ENCODE measurements at regions of chr20 and their contacts with region 1.

Region 1: GRCh38 chr20:46689082-46689754 is at the start of gene TP53RK:
- DNase-seq: peak; percentile 99
- ATAC-seq: peak; percentile 98
- H3K4me3 Mint-ChIP-seq: peak within 1 kb of the TSS; percentile 93
- H3K27ac Mint-ChIP-seq: peak within 1 kb of the TSS; percentile 97
- H3K4me1 Mint-ChIP-seq: peaks cover 42% of the 10 kb centered on the region
- H3K27me3 Mint-ChIP-seq: no peaks in the 10 kb centered on the region
- CTCF ChIP-seq: no peak
- total RNA-seq, gene TP53RK: 12.2 to 13.6 TPM

Region 2: GRCh38 chr20:46520976-46521579 is 168.1 kb before region 1 on chr20:
- CTCF ChIA-PET with region 1: interaction called, 116 read pairs
- POLR2A ChIA-PET with region 1: no interaction called
- intact Hi-C with region 1: no loop called
- DNase-seq: peak; percentile 68
- ATAC-seq: peak; percentile 98
- H3K4me3 Mint-ChIP-seq: no peak overlapping the region
- H3K27ac Mint-ChIP-seq: no peak overlapping the region
- H3K4me1 Mint-ChIP-seq: no peaks in the 10 kb centered on the region
- H3K27me3 Mint-ChIP-seq: peaks cover 17% of the 10 kb centered on the region
- CTCF ChIP-seq: peak; percentile 68

Region 3: DNA sequence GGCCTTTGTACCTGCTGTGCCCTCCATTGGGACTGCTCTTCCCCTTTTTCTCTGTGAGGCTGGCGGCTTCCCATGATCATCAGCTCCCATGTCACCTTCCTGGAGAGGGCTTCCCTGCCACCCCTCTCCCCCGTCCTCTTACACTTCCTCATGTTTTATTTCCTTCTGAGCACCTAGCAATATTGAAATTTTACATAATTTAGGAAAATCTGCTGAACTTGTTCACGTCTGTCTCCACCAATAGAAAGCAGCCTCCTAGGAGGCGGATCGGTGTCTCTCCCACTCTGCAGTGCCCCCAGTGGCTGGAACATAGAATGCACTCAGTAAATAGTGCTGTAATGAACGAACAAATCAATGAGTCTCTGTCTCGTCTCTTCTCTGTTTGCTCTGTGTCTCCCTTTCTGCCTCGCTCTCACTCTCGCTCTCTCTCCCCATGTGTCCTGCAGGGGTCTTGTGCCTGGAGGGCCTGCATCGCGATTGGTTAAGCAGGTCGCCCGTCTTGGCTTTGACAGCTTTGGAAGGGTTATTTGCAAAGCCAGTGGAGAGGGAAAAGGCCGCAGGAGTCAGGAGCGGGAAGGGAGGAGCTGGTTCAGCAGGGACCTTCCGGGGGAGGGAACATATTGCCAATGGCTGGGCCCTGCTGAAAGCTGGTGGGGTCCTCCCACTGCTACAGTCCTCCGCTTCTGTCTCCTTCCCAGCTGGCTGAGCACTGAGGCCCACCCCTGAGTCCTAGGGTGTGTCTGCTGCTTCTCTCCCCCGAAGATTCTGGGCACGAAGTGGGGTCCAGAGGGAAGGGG is 126.6 kb before region 1 on chr20:
- CTCF ChIA-PET with region 1: interaction called, 3 read pairs
- POLR2A ChIA-PET with region 1: no interaction called
- intact Hi-C with region 1: loop called (anchors 10 kb)
- DNase-seq: peak; percentile 83
- ATAC-seq: peak; percentile 87
- H3K4me3 Mint-ChIP-seq: no peak overlapping the region
- H3K27ac Mint-ChIP-seq: no peak overlapping the region
- H3K4me1 Mint-ChIP-seq: peaks cover 23% of the 10 kb centered on the region
- H3K27me3 Mint-ChIP-seq: peaks cover 7% of the 10 kb centered on the region
- CTCF ChIP-seq: peak; percentile 91

Region 4: GRCh38 chr20:46670585-46671584 is 18.3 kb before region 1 on chr20:
- CTCF ChIA-PET with region 1: no interaction called
- POLR2A ChIA-PET with region 1: no interaction called
- intact Hi-C with region 1: no loop called
- DNase-seq: no peak
- ATAC-seq: no peak
- H3K4me3 Mint-ChIP-seq: no peak overlapping the region
- H3K27ac Mint-ChIP-seq: no peak overlapping the region
- H3K4me1 Mint-ChIP-seq: no peaks in the 10 kb centered on the region
- H3K27me3 Mint-ChIP-seq: no peaks in the 10 kb centered on the region
- CTCF ChIP-seq: no peak